ENCODE measurements at regions of chr7 and their contacts with region 1.

Region 1: DNA sequence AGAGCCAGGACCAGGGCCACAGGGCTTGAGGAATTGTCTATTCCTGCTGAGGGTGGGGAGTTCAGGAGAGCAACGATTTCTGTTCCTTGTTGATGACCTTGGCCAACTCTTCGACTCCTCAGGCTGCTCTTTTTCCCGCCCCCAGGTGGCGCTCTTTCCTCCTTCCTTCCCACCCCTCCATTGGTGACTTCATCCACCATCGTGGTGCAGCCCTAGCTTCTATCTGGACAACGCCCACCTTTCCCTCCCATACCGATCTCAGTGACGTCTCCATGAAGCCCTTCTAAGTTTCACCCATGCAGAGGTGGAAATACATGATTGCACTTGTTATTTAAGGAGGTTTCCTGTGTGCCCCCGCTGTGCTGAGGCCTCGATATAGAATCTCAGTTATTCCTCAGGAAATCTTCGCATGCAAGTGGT is 22.1 kb upstream of the CARD11 start:
- DNase-seq: peak; percentile 45
- H3K4me3 Mint-ChIP-seq: no peak overlapping the region
- H3K27ac Mint-ChIP-seq: peak overlapping the region; percentile 18
- H3K4me1 Mint-ChIP-seq: peaks cover 75% of the 10 kb centered on the region
- H3K27me3 Mint-ChIP-seq: no peaks in the 10 kb centered on the region

Region 2: GRCh38 chr7:2978403-2978802 is 87.3 kb before region 1 on chr7:
- intact Hi-C with region 1: loop called (anchors 5 kb)
- DNase-seq: peak; percentile 59
- H3K4me3 Mint-ChIP-seq: peak overlapping the region; percentile 51
- H3K27ac Mint-ChIP-seq: peak overlapping the region; percentile 58
- H3K4me1 Mint-ChIP-seq: peaks cover 44% of the 10 kb centered on the region
- H3K27me3 Mint-ChIP-seq: no peaks in the 10 kb centered on the region

Region 3: DNA sequence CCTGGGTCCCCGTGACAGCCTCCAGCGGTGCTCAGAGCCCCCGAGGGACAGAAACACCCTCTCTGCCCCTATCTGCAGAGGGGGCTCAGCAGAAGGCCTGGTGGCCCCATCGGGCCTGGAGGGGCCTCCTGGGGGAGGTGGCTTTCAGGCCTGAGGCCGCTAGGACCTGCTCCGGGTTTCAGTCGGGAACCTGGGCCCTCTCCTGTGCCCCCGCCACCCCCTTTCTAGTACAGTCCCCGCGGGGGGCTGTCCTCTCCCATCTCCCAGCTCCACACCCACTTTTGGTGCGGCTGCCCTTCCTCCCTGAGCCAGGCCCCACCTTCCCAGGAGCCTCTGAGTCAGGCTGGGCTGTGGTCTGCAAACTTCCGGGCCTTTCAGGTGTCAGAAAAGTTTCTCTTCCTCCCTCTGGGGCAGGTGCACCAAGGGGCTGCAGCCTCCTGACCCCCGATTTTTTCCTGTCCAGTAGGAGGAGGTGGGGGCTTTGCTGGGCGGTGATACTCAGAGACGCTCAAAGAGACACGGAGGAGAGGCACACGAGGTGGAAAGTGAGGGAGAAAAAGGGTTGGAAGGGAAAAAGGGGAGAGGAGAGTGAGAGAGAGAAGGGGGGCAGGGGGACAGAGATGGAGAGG is 22.8 kb before region 1 on chr7:
- intact Hi-C with region 1: loop called (anchors 1 kb)
- DNase-seq: peak; percentile 60
- H3K4me3 Mint-ChIP-seq: peak overlapping the region; percentile 87
- H3K27ac Mint-ChIP-seq: peak overlapping the region; percentile 88
- H3K4me1 Mint-ChIP-seq: peaks cover 35% of the 10 kb centered on the region
- H3K27me3 Mint-ChIP-seq: no peaks in the 10 kb centered on the region

Region 4: GRCh38 chr7:3092468-3092867 is 26.7 kb after region 1 on chr7:
- intact Hi-C with region 1: loop called (anchors 1 kb)
- DNase-seq: peak; percentile 71
- H3K4me3 Mint-ChIP-seq: peak overlapping the region; percentile 18
- H3K27ac Mint-ChIP-seq: peak overlapping the region; percentile 77
- H3K4me1 Mint-ChIP-seq: peaks cover 44% of the 10 kb centered on the region
- H3K27me3 Mint-ChIP-seq: no peaks in the 10 kb centered on the region

Region 5: GRCh38 chr7:3103614-3104398 is 38.1 kb after region 1 on chr7:
- intact Hi-C with region 1: loop called (anchors 1 kb)
- DNase-seq: no peak
- H3K4me3 Mint-ChIP-seq: no peak overlapping the region
- H3K27ac Mint-ChIP-seq: no peak overlapping the region
- H3K4me1 Mint-ChIP-seq: peaks cover 58% of the 10 kb centered on the region
- H3K27me3 Mint-ChIP-seq: no peaks in the 10 kb centered on the region

Region 6: DNA sequence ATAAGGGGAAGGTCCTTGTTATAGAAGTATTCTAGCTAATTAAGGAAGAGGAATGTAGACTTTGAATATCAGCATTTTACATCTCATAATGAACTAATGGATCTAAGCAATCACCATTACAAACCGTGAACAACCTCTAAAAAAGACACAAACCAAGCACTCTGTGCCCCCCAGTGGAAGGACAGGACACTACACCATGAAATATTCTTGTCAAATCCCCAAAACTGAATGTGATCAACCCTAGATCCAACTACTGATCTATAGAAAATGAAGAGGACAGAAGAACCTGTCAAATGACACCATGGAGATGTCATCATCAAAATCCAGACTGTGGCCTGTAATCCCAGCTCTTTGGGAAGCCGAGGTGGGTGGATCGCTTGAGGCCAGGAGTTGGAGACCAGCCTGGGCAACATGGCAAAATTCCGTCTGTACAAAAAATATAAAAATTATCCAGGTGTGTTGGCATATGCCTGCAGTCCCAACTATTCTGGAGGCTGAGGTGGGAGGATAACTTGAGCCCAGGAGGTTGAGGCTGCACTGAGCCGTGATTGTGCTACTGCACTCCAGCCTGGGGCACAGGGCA is 89.3 kb after region 1 on chr7:
- intact Hi-C with region 1: loop called (anchors 1 kb)
- DNase-seq: peak; percentile 48
- H3K4me3 Mint-ChIP-seq: no peak overlapping the region
- H3K27ac Mint-ChIP-seq: no peak overlapping the region
- H3K4me1 Mint-ChIP-seq: peaks cover 8% of the 10 kb centered on the region
- H3K27me3 Mint-ChIP-seq: peaks cover 11% of the 10 kb centered on the region